Ovary (tissue), 10 donors: ENCODE measurements at regions of chr19 and their contacts with region 1.

Region 1: GRCh38 chr19:8423817-8424223 is 10.7 kb downstream of the MARCHF2 start:
- DNase-seq: peak; percentile 88 to 97 (median 93)
- H3K4me3 ChIP-seq: no peak overlapping the region
- H3K27ac ChIP-seq: peak overlapping the region; percentile 22 to 59
- H3K4me1 ChIP-seq: peaks cover 4% of the 10 kb centered on the region
- H3K27me3 ChIP-seq: no peaks in the 10 kb centered on the region
- CTCF ChIP-seq: no peak
- EP300 ChIP-seq: peak; percentile 81
- POLR2A ChIP-seq: no peak

Region 2: DNA sequence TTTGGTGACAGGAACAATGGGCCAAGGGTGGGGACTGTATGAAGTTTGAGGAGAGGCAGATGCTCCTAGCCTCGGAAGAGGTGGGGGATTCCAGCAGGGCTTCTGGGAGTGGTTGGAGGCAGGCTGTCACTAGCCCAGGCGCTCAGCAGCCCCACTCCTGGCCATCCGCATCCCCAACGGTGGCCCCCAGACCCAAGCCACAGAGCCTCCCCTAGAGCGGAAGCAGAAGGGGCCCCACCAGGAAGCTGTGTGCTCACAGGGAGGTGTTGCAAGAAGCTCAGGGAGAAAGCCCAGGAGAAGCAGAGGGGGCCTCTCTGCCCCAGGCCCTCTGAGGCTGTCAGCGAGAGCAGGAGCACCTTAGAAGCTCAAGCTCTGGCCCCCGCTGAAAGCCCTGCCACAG is 70.3 kb after region 1 on chr19:
- intact Hi-C with region 1: loop called in 1 of 4 experiments (anchors 10 kb)
- DNase-seq: no peak
- H3K4me3 ChIP-seq: no peak overlapping the region
- H3K27ac ChIP-seq: no peak overlapping the region
- H3K4me1 ChIP-seq: no peaks in the 10 kb centered on the region
- H3K27me3 ChIP-seq: no peaks in the 10 kb centered on the region
- CTCF ChIP-seq: no peak
- EP300 ChIP-seq: no peak
- POLR2A ChIP-seq: no peak